Body of pancreas (tissue), 4 donors: ENCODE measurements at regions of chr15 and their contacts with region 1.

Region 1: DNA sequence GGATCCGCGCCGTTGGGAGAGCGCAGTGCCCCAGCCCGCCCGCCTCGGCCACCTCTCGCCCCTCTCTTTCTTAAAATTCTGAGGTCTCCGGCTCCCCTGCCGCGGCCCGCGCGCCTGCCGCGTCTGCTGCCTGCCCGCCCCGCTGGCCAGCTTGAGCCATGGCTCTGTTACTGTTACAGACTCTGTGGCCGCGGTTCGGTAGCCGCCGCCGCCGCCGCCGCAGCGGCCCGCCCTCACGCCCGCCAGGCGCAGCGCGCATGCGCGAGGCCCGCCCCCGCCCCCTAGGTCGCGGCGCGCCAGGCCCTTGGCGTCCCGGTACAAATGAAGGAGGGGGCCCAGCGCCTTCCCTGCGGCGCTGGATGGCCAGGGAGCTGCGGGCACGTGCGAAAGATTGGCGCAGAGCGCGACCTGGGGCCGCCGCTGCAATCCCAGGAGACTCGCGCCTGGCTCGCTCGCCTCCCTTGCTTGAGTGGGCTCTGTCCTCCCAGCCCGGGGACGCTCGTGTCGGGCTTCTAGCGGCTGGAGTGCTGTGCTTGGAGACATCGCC is at the start of gene ONECUT1:
- DNase-seq: peak; percentile 83 to 89 (median 86)
- ATAC-seq: peak; percentile 75
- H3K4me3 ChIP-seq: peak within 1 kb of the TSS; percentile 57 to 92
- H3K27ac ChIP-seq: peak within 1 kb of the TSS; percentile 40 to 96 (median 92)
- H3K4me1 ChIP-seq: peaks cover 17% of the 10 kb centered on the region
- H3K27me3 ChIP-seq: no peaks in the 10 kb centered on the region
- CTCF ChIP-seq: peak in 1 of 7 experiments; percentile 22
- POLR2A ChIP-seq: peak; percentile 69 to 88 (median 88)
- total RNA-seq, gene ONECUT1: 68.0 to 126 TPM

Region 2: GRCh38 chr15:53068636-53069035 is 278.4 kb after region 1 on chr15:
- intact Hi-C with region 1: loop called (anchors 10 kb)
- DNase-seq: no peak
- ATAC-seq: no peak
- H3K4me3 ChIP-seq: no peak overlapping the region
- H3K27ac ChIP-seq: no peak overlapping the region
- H3K4me1 ChIP-seq: peaks cover 11% of the 10 kb centered on the region
- H3K27me3 ChIP-seq: no peaks in the 10 kb centered on the region
- CTCF ChIP-seq: no peak
- POLR2A ChIP-seq: no peak